Activated T-helper 1 cell treated with anti-CD3 and anti-CD28 coated beads, Interleukin-12 subunit alpha, Interleukin-12 subunit beta, Interleukin-2, Interleukin-4 antibody, amounts not matched to agents 30 ng/mL and 10 ng/mL and 1 ng/mL, durations not matched to agents 14 hours and 24 hours and 36 hours (primary cell): ENCODE measurements at regions of chr2 and their contacts with region 1.

Region 1: GRCh38 chr2:181223234-181223633 is 234.0 kb upstream of the ITGA4 start:
- DNase-seq: no peak
- H3K4me3 Mint-ChIP-seq: peak overlapping the region; percentile 34
- H3K27ac Mint-ChIP-seq: peak overlapping the region; percentile 93
- H3K4me1 Mint-ChIP-seq: peaks cover 31% of the 10 kb centered on the region
- H3K27me3 Mint-ChIP-seq: no peaks in the 10 kb centered on the region

Region 2: DNA sequence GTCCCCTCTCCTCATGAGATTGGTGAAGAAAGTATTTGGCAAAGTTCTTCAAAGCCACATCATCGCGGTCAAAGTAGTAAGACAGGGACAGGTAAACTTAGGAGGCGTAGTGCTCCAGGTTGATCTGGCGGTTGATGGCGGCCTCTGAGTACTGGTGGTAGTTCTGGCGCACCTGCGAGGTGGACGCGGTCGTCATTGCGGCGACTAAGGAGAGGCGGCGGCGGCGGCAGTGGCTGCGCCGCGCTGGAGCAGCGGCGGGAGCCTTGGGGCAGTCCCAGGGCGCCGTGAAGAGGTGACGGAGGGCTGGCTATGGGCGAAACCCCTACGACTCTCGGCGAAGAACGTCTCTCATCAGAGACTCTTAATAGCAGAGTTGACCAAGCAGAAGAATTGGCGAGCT is 350.0 kb before region 1 on chr2:
- intact Hi-C with region 1: no loop called
- DNase-seq: no peak
- H3K4me3 Mint-ChIP-seq: no peak overlapping the region
- H3K27ac Mint-ChIP-seq: no peak overlapping the region
- H3K4me1 Mint-ChIP-seq: no peaks in the 10 kb centered on the region
- H3K27me3 Mint-ChIP-seq: peaks cover 4% of the 10 kb centered on the region

Region 3: DNA sequence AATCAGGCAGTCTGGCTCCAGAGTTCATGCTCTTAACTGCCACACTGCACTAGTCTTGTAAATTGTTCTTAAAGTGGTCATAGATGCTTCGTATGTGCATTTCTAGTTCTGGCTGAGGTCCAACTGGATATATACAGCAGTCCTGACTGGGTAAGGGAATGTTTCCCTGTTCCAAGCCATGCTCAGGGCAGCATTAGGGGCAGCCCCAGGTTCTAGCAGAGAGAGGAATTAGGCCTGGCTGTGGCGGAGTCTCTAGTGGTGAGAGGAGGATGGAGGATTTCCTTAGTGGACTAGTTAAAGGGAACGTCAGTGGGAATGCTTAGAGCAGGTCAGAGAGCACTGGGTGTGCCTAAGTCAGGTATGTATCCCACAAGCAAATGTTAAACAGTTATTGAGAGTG is 214.8 kb before region 1 on chr2:
- intact Hi-C with region 1: no loop called
- DNase-seq: no peak
- H3K4me3 Mint-ChIP-seq: no peak overlapping the region
- H3K27ac Mint-ChIP-seq: no peak overlapping the region
- H3K4me1 Mint-ChIP-seq: peaks cover 2% of the 10 kb centered on the region
- H3K27me3 Mint-ChIP-seq: no peaks in the 10 kb centered on the region

Region 4: DNA sequence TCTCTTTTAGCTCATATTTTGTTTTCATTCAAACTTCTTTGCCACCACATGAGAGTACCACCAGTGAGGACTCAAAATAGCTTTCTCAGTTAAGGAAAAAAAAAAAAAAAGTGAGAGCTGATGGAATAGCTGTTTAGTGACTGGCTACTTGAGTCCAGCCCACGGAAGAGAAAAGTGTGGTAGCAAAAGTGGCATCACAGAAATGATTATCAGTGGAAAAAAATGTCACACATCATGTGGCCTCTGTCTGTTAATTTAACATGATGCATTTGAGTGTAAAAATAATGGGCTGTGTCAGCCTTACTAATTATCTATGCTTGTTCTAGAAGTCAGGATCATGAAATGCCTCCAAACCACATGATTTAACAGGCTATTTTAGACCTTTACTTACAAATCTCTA is 110.3 kb before region 1 on chr2:
- intact Hi-C with region 1: no loop called
- DNase-seq: no peak
- H3K4me3 Mint-ChIP-seq: no peak overlapping the region
- H3K27ac Mint-ChIP-seq: peak overlapping the region; percentile 12
- H3K4me1 Mint-ChIP-seq: peaks cover 44% of the 10 kb centered on the region
- H3K27me3 Mint-ChIP-seq: no peaks in the 10 kb centered on the region

Region 5: GRCh38 chr2:181178823-181179412 is 44.3 kb before region 1 on chr2:
- intact Hi-C with region 1: loop called (anchors 2 kb)
- DNase-seq: no peak
- H3K4me3 Mint-ChIP-seq: peak overlapping the region; percentile 7
- H3K27ac Mint-ChIP-seq: peak overlapping the region; percentile 57
- H3K4me1 Mint-ChIP-seq: peaks cover 56% of the 10 kb centered on the region
- H3K27me3 Mint-ChIP-seq: no peaks in the 10 kb centered on the region

Region 6: GRCh38 chr2:181197140-181197760 is 26.0 kb before region 1 on chr2:
- intact Hi-C with region 1: loop called (anchors 2 kb)
- DNase-seq: no peak
- H3K4me3 Mint-ChIP-seq: peak overlapping the region; percentile 11
- H3K27ac Mint-ChIP-seq: peak overlapping the region; percentile 73
- H3K4me1 Mint-ChIP-seq: peaks cover 55% of the 10 kb centered on the region
- H3K27me3 Mint-ChIP-seq: no peaks in the 10 kb centered on the region